PC-9 (cell line): ENCODE measurements at regions of chr22 and their contacts with region 1.

Region 1: DNA sequence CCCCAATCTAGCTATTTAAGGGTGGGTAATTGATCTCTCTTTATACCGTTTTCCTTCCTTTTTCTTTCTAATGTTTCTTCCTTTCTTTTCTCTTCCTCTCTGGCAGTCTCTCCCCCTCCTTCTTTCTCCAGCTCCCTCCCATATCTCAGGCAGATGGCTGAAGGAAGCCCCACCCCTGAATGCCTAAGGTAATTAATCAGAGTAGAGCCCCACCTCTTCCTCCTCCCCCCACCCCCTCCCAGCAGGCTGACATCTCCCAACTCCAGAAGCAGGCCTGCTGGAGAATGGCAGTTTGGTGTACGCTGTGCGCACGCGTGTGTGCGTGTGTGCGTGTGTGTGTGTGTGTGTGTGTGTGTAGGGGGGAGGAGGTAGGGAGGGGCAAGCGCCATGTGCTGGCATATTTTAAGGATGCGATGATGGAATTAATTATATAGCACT is 122.6 kb downstream of the APOL5 start:
- DNase-seq: peak; percentile 71 to 91
- H3K4me3 ChIP-seq: peak overlapping the region; percentile 69
- H3K27ac ChIP-seq: peak overlapping the region; percentile 85
- H3K4me1 ChIP-seq: peaks cover 62% of the 10 kb centered on the region
- H3K27me3 ChIP-seq: no peaks in the 10 kb centered on the region
- CTCF ChIP-seq: no peak

Region 2: DNA sequence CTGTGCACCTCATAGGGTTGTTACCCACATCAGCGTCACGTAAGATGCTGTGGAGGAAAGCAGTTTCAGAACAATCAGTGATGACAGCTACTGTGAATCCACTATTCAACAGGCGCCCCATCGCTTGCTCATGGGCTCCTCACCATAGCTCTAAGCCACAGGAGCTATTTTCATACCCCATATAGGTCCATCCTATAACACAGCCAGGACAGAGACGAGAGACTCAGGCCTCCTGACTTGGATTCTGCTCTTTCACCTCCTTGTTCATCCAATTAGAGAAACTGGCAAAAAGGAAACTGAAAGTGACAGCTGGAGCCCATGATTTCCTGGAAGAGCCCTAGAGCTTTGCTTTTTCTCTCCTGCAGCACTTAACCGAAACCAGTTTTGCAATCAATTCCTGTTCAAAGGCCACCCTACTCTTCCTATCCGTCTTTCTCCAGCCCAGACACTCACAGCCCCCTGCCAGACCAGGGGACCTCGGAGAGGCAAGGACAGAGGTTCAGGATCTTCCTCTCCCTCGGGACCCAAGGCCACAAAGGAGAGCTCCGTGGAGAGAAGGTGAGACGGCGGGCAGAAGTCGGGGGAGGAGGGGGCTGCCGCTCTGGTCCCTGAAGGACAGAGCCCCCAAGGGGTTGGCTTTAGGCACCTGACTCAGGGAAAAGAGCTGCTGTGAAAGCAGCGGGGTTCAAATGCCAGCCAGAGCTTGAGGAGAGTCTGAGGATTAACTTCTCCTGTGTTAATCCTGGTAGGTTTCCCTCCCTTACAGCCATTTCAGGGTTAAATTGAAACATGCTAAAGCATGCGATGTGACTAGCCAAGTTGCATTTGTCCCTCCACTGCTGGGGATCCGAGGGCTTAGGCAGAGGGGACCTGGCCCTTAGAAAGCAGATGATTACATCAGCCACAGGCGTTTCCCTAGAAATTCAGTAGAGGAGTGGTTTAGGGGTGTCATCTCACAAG is 192.0 kb before region 1 on chr22 and contains the start of gene APOL6:
- CTCF ChIA-PET with region 1: no interaction called
- POLR2A ChIA-PET with region 1: no interaction called
- intact Hi-C with region 1: loop called (anchors 2 kb)
- DNase-seq: peak; percentile 48 to 88
- H3K4me3 ChIP-seq: peak within 1 kb of the TSS; percentile 80
- H3K27ac ChIP-seq: peak within 1 kb of the TSS; percentile 97
- H3K4me1 ChIP-seq: peaks cover 49% of the 10 kb centered on the region
- H3K27me3 ChIP-seq: no peaks in the 10 kb centered on the region
- CTCF ChIP-seq: no peak
- total RNA-seq, gene APOL6: 16.7 and 18.6 TPM in 2 replicates

Region 3: DNA sequence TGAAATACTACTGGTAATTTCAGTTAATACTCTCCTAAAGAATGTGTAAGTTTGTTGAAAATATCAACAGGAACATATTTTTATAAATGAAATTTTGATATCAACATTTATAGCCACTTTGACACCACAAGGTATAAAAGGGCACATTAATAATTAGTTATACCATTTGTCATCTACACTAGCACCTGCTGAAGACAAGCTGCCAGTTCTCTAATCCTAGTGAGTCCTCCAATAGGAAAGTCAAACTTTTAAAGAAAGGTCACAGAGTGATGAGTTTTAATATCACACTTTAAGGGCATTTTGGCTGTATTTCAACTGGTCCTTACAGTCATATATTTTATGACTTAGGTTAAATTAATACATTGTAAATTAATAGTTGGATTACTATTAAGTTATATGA is 70.3 kb before region 1 on chr22:
- CTCF ChIA-PET with region 1: interaction called, 13 read pairs
- POLR2A ChIA-PET with region 1: no interaction called
- intact Hi-C with region 1: no loop called
- DNase-seq: no peak
- H3K4me3 ChIP-seq: no peak overlapping the region
- H3K27ac ChIP-seq: no peak overlapping the region
- H3K4me1 ChIP-seq: no peaks in the 10 kb centered on the region
- H3K27me3 ChIP-seq: no peaks in the 10 kb centered on the region
- CTCF ChIP-seq: no peak

Region 4: GRCh38 chr22:35894937-35895708 is 54.8 kb after region 1 on chr22:
- CTCF ChIA-PET with region 1: no interaction called
- POLR2A ChIA-PET with region 1: no interaction called
- intact Hi-C with region 1: loop called (anchors 2 kb)
- DNase-seq: peak; percentile 49 to 100
- H3K4me3 ChIP-seq: peak overlapping the region; percentile 33; the same call in 1 of the 2 replicates
- H3K27ac ChIP-seq: peak overlapping the region; percentile 94
- H3K4me1 ChIP-seq: peaks cover 52% of the 10 kb centered on the region
- H3K27me3 ChIP-seq: no peaks in the 10 kb centered on the region
- CTCF ChIP-seq: peak; percentile 54

Region 5: GRCh38 chr22:36065775-36066559 is 225.6 kb after region 1 on chr22:
- CTCF ChIA-PET with region 1: interaction called, 13 read pairs
- POLR2A ChIA-PET with region 1: no interaction called
- intact Hi-C with region 1: loop called (anchors 5 kb)
- DNase-seq: peak; percentile 88 to 95
- H3K4me3 ChIP-seq: peak overlapping the region; percentile 76
- H3K27ac ChIP-seq: peak overlapping the region; percentile 71
- H3K4me1 ChIP-seq: peaks cover 12% of the 10 kb centered on the region
- H3K27me3 ChIP-seq: no peaks in the 10 kb centered on the region
- CTCF ChIP-seq: peak; percentile 100

Region 6: GRCh38 chr22:36311386-36312358 is 471.4 kb after region 1 on chr22:
- CTCF ChIA-PET with region 1: no interaction called
- POLR2A ChIA-PET with region 1: no interaction called
- intact Hi-C with region 1: no loop called
- DNase-seq: peak; percentile 72 to 78
- H3K4me3 ChIP-seq: no peak overlapping the region
- H3K27ac ChIP-seq: no peak overlapping the region
- H3K4me1 ChIP-seq: 0 out of 2 replicates have a peak, but pooled peaks cover 9% of the 10 kb centered on the region
- H3K27me3 ChIP-seq: no peaks in the 10 kb centered on the region
- CTCF ChIP-seq: no peak